WTC11 (cell line): ENCODE measurements at regions of chr1 and their contacts with region 1.

Region 1: DNA sequence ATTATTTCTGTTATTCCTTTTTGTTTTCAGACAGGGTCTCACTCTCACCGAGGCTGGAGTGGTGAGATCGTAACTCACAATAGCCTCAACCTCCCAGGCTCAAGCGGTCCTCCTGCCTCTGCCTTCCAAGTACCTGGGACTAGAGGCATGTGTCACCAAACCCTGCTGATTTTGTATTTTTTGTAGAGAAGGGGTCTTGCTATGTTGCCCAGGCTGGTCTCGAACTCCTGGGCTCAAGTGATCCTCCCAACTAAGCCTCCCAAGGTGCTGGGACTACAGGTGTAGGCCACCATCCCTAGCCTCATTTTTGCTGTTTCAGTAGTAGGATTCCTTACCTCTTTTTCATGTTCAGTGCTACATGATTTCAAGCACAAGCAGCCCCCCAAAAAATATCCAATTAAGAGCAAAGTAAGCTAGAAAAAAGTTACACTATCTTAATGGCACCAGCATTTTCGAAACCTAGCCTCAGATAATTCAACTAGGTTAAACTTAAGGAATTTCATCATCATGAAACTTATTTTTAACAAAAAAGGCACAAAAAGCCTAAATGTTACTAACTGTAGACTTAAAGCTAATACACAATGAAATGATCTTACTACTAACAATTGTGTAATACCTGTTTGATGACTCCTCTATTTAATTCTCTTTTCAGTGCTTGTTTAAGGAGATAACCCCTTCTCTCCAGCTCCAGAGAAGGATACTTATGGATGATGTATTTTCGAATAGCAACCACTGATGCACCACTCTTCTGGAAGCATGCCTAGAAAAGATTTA is 16.6 kb downstream of the HP1BP3 start:
- DNase-seq: no peak
- ATAC-seq: no peak
- H3K4me3 Mint-ChIP-seq: no peak overlapping the region
- H3K27ac Mint-ChIP-seq: no peak overlapping the region
- H3K4me1 Mint-ChIP-seq: no peaks in the 10 kb centered on the region
- H3K27me3 Mint-ChIP-seq: no peaks in the 10 kb centered on the region
- CTCF ChIP-seq: no peak

Region 2: DNA sequence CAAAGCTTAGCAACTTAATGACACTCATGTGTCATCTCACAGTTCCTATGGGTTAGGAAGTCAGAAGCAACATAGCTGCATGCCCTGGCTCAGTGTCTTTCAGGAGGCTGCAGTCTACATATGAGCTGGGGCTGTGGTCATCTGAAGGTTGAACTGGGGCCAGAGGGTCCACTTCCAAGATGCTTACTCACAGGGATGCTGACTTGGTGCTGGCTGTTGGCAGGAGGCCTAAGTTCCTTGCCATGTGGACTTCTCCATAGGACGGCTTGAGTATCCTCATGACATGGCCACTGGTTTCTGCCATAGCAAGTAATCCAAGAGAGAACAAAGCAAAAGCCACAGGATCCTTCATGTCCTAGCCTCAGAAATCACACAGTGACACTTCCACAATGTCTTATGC is 230.2 kb before region 1 on chr1:
- CTCF ChIA-PET with region 1: no interaction called
- POLR2A ChIA-PET with region 1: no interaction called
- DNase-seq: no peak
- ATAC-seq: no peak
- H3K4me3 Mint-ChIP-seq: no peak overlapping the region
- H3K27ac Mint-ChIP-seq: no peak overlapping the region
- H3K4me1 Mint-ChIP-seq: no peaks in the 10 kb centered on the region
- H3K27me3 Mint-ChIP-seq: peaks cover 30% of the 10 kb centered on the region
- CTCF ChIP-seq: no peak

Region 3: GRCh38 chr1:20753589-20753988 is 16.9 kb before region 1 on chr1:
- CTCF ChIA-PET with region 1: no interaction called
- POLR2A ChIA-PET with region 1: no interaction called
- DNase-seq: no peak
- ATAC-seq: no peak
- H3K4me3 Mint-ChIP-seq: no peak overlapping the region
- H3K27ac Mint-ChIP-seq: peak overlapping the region; percentile 32; the same call in 1 of the 2 replicates
- H3K4me1 Mint-ChIP-seq: 0 out of 2 replicates have a peak, but pooled peaks cover 5% of the 10 kb centered on the region
- H3K27me3 Mint-ChIP-seq: no peaks in the 10 kb centered on the region
- CTCF ChIP-seq: no peak

Region 4: DNA sequence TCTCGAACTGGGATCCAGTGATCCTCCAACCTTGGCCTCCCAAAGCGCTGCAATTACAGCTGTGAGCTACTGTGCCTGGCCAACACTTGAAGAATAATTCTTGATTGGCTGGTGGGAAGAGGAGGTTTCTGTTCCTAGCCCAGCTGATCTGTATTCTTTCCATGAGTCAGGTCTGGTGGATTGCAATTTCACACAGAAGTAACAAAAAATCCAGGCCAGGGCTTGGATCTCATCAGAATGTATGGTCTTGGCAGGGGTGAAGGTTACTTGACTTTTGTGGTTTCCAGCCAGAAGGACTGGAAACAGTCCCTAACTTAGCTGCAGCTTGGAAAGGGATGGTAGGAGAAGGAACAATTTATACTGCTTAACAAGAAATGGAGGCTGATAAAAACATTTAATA is 21.7 kb after region 1 on chr1:
- CTCF ChIA-PET with region 1: no interaction called
- POLR2A ChIA-PET with region 1: no interaction called
- DNase-seq: no peak
- ATAC-seq: no peak
- H3K4me3 Mint-ChIP-seq: no peak overlapping the region
- H3K27ac Mint-ChIP-seq: no peak overlapping the region
- H3K4me1 Mint-ChIP-seq: peaks cover 8% of the 10 kb centered on the region
- H3K27me3 Mint-ChIP-seq: no peaks in the 10 kb centered on the region
- CTCF ChIP-seq: no peak

Region 5: DNA sequence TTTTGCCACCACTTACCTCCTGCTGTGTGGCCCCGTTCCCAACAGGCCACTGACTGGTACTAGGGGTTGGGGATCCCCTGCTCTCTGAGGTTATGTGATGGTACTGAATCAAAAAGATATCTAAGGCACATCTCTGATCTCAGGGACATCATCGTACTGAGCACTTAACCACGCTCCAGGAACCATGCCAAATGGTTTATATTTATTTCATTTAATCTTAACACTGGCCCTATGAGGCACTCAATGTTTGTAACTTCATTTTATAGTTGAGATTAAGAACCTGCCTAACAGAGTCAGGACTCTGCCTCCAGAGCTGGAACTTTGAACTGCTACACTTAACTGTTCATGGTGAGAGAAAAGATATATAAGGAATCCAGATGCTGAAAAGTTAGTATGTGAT is 114.6 kb after region 1 on chr1:
- CTCF ChIA-PET with region 1: no interaction called
- POLR2A ChIA-PET with region 1: no interaction called
- DNase-seq: peak; percentile 16
- ATAC-seq: no peak
- H3K4me3 Mint-ChIP-seq: no peak overlapping the region
- H3K27ac Mint-ChIP-seq: no peak overlapping the region
- H3K4me1 Mint-ChIP-seq: peaks cover 17% of the 10 kb centered on the region
- H3K27me3 Mint-ChIP-seq: no peaks in the 10 kb centered on the region
- CTCF ChIP-seq: no peak

Region 6: DNA sequence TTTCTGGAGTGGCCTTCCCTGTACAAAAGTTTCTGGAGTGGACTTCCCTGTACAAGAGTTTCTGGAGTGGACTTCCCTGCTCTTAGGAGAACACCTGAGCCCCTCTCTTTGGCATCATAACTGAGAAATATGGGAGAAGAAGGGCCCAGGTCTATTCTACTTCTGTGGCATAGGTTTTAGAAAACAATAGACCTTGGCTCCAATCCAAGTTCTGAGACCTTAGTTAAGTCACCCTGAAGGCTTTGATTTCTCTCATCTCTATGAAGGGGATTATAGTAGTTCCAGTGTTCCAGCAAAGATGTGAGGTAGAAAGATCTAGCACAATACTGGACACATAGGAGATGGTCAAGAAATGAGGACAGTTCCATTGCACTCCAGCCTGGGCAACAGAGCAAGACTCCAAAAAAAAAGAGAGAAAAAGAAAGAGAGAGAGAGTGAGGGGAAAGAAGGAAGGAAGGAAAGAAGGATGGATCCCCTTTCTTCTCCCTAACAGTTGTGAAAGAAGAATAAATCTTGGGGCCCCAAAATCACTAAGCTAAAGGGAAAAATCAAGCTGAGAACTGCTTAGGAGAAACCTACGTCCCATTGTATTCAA is 419.5 kb after region 1 on chr1:
- CTCF ChIA-PET with region 1: no interaction called
- POLR2A ChIA-PET with region 1: interaction called, 10 read pairs
- DNase-seq: no peak
- ATAC-seq: no peak
- H3K4me3 Mint-ChIP-seq: no peak overlapping the region
- H3K27ac Mint-ChIP-seq: no peak overlapping the region
- H3K4me1 Mint-ChIP-seq: no peaks in the 10 kb centered on the region
- H3K27me3 Mint-ChIP-seq: peaks cover 96% of the 10 kb centered on the region
- CTCF ChIP-seq: no peak